ENCODE measurements at regions of chr11 and their contacts with region 1.

Region 1: DNA sequence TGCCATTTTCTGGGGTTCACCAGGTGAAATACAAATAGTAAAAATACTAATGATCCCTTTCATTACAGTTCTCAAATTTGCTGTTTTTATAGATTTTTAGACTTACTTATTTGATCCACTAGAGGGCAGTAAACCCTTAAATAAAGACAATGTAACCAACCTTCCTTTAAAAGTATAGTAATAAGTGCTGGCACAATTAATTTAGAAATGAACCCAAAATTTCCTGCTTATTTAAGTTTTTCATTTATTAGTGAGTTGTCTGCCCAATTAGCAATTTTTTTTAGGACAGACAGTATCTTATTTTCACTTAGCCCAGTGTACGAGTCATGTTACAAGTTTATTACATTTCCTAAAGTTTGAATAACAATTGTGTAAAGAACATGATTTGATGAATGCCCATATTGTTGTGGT is 4.7 kb downstream of the DDIAS start:
- DNase-seq: peak in 3 of 14 experiments; percentile 45 to 63 (median 52)
- ATAC-seq: no peak
- H3K4me3 ChIP-seq: no peak overlapping the region
- H3K4me3 Mint-ChIP-seq: no peak overlapping the region
- H3K27ac ChIP-seq: no peak overlapping the region
- H3K27ac Mint-ChIP-seq: peak overlapping the region; percentile 2
- H3K4me1 ChIP-seq: peaks cover 9% of the 10 kb centered on the region
- H3K4me1 Mint-ChIP-seq: peaks cover 28% of the 10 kb centered on the region
- H3K27me3 ChIP-seq: no peaks in the 10 kb centered on the region
- H3K27me3 Mint-ChIP-seq: no peaks in the 10 kb centered on the region
- CTCF ChIP-seq: peak; percentile 73

Region 2: DNA sequence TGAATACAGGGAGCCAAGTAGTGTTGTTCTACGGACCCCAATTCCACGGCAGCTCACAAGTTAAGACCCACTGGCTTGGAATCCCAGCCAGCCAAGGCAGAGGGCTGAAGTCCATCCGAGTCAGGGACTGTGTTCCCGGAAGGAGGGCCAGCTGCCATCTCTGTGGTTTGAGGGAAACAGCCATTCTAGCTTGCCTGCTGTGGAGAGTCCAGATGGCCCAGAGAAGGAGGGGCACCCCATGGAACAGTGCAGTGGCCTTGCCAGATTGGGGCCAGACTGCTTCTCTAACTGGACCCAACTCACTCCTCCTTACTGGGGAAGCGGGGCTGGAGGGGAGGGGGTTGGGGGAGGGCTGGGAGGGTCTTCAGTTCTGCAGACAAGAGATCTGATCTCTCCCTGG is 329.0 kb before region 1 on chr11:
- CTCF ChIA-PET with region 1: no interaction called
- POLR2A ChIA-PET with region 1: no interaction called
- intact Hi-C with region 1: no loop called
- DNase-seq: no peak
- ATAC-seq: no peak
- H3K4me3 ChIP-seq: no peak overlapping the region
- H3K4me3 Mint-ChIP-seq: no peak overlapping the region
- H3K27ac ChIP-seq: no peak overlapping the region
- H3K27ac Mint-ChIP-seq: no peak overlapping the region
- H3K4me1 ChIP-seq: no peaks in the 10 kb centered on the region
- H3K4me1 Mint-ChIP-seq: no peaks in the 10 kb centered on the region
- H3K27me3 ChIP-seq: peaks cover 0 to 2% of the 10 kb centered on the region in 2 experiments
- H3K27me3 Mint-ChIP-seq: no peaks in the 10 kb centered on the region
- CTCF ChIP-seq: no peak

Region 3: DNA sequence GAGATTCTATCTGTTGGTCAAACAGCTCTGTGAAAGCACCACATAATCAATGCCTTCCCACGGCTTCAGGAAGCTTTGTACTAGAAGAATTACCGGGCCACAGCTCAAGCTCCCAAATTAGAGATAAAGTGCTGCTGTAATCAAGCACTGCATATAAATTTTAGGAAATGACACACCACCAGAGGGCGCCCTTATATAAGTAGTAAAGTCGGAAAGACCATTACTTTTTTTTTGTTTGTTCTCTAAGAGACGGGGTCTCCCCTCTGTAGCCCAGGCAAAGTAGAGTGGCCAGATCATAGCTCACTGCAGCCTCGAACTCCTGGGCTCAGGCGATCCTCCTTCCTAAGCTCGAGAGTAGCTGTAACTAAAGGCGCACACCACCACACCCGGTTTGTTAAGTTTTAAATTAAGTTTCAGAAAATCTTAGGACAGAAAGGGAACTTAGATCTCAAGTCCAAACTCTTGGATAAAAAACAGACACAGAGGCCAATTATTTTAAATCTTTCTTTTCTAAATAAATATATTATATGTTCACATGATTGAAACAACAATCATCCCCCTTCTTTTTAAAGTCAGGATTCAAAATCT is 38.7 kb before region 1 on chr11:
- CTCF ChIA-PET with region 1: interaction called, 8 read pairs
- POLR2A ChIA-PET with region 1: interaction called, 28 read pairs
- intact Hi-C with region 1: loop called (anchors 1 to 2 kb)
- DNase-seq: peak; percentile 37 to 88 (median 70)
- ATAC-seq: peak; percentile 66
- H3K4me3 ChIP-seq: no peak overlapping the region
- H3K4me3 Mint-ChIP-seq: no peak overlapping the region
- H3K27ac ChIP-seq: no peak overlapping the region
- H3K27ac Mint-ChIP-seq: no peak overlapping the region
- H3K4me1 ChIP-seq: peaks cover 5% of the 10 kb centered on the region
- H3K4me1 Mint-ChIP-seq: peaks cover 11% of the 10 kb centered on the region
- H3K27me3 ChIP-seq: no peaks in the 10 kb centered on the region
- H3K27me3 Mint-ChIP-seq: no peaks in the 10 kb centered on the region
- CTCF ChIP-seq: peak; percentile 80

Region 4: GRCh38 chr11:82988936-82989627 is 82.8 kb after region 1 on chr11:
- CTCF ChIA-PET with region 1: no interaction called
- POLR2A ChIA-PET with region 1: interaction called, 4 read pairs
- intact Hi-C with region 1: loop called (anchors 1 to 2 kb)
- DNase-seq: no peak
- ATAC-seq: no peak
- H3K4me3 ChIP-seq: no peak overlapping the region
- H3K4me3 Mint-ChIP-seq: no peak overlapping the region
- H3K27ac ChIP-seq: no peak overlapping the region
- H3K27ac Mint-ChIP-seq: no peak overlapping the region
- H3K4me1 ChIP-seq: no peaks in the 10 kb centered on the region
- H3K4me1 Mint-ChIP-seq: peaks cover 9% of the 10 kb centered on the region
- H3K27me3 ChIP-seq: no peaks in the 10 kb centered on the region
- H3K27me3 Mint-ChIP-seq: no peaks in the 10 kb centered on the region
- CTCF ChIP-seq: no peak

Region 5: DNA sequence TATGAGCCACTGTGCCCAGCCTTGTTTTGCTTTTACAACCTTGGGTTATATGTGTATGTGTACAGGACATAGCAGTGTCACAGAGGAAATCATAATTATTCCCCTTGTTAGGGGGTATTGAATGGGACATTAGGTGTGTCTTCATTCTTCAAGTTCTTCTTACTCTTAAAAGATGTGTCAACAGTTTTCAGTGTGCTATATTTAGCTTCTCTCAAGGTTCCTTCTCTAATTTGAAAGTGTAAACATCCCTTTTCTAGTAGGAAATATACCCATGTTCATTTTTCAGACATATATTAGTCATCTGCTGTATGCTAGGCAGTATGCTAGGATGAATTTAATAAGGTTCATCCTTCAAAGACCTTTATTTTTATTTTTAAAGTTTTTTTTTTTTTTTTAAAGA is 267.8 kb after region 1 on chr11:
- CTCF ChIA-PET with region 1: no interaction called
- POLR2A ChIA-PET with region 1: no interaction called
- intact Hi-C with region 1: loop called in 1 of 2 experiments (anchors 5 kb)
- DNase-seq: no peak
- ATAC-seq: no peak
- H3K4me3 ChIP-seq: no peak overlapping the region
- H3K4me3 Mint-ChIP-seq: peak overlapping the region; percentile 14
- H3K27ac ChIP-seq: no peak overlapping the region
- H3K27ac Mint-ChIP-seq: peak overlapping the region; percentile 66
- H3K4me1 ChIP-seq: peaks cover 40% of the 10 kb centered on the region
- H3K4me1 Mint-ChIP-seq: peaks cover 75% of the 10 kb centered on the region
- H3K27me3 ChIP-seq: no peaks in the 10 kb centered on the region
- H3K27me3 Mint-ChIP-seq: no peaks in the 10 kb centered on the region
- CTCF ChIP-seq: no peak

Region 6: GRCh38 chr11:83285771-83286528 is 379.7 kb after region 1 on chr11 and contains the start of gene CCDC90B:
- CTCF ChIA-PET with region 1: interaction called, 6 read pairs
- POLR2A ChIA-PET with region 1: interaction called, 93 read pairs
- intact Hi-C with region 1: loop called (anchors 1 to 2 kb)
- DNase-seq: peak; percentile 88 to 98 (median 90)
- ATAC-seq: peak; percentile 90
- H3K4me3 ChIP-seq: peak within 1 kb of the TSS; percentile 92
- H3K4me3 Mint-ChIP-seq: peak within 1 kb of the TSS; percentile 97
- H3K27ac ChIP-seq: peak within 1 kb of the TSS; percentile 95 to 99
- H3K27ac Mint-ChIP-seq: peak within 1 kb of the TSS; percentile 100
- H3K4me1 ChIP-seq: peaks cover 13% of the 10 kb centered on the region
- H3K4me1 Mint-ChIP-seq: peaks cover 52% of the 10 kb centered on the region
- H3K27me3 ChIP-seq: no peaks in the 10 kb centered on the region
- H3K27me3 Mint-ChIP-seq: no peaks in the 10 kb centered on the region
- CTCF ChIP-seq: no peak
- total RNA-seq, gene CCDC90B: 23.5 to 25.7 TPM

Measured in CD4-positive, alpha-beta T cell (primary cell).